ENCODE measurements at regions of chr4 and their contacts with region 1.

Region 1: GRCh38 chr4:102449751-102450352 is 51.3 kb upstream of the NFKB1 start:
- DNase-seq: peak; percentile 46
- H3K4me3 ChIP-seq: no peak overlapping the region
- H3K27ac ChIP-seq: no peak overlapping the region
- H3K4me1 ChIP-seq: peaks cover under 1 to 4% (median 3%) of the 10 kb centered on the region in 4 donors
- H3K27me3 ChIP-seq: no peaks in the 10 kb centered on the region
- CTCF ChIP-seq: peak; percentile 55 to 69 (median 63)
- EP300 ChIP-seq: no peak
- POLR2A ChIP-seq: no peak

Region 2: DNA sequence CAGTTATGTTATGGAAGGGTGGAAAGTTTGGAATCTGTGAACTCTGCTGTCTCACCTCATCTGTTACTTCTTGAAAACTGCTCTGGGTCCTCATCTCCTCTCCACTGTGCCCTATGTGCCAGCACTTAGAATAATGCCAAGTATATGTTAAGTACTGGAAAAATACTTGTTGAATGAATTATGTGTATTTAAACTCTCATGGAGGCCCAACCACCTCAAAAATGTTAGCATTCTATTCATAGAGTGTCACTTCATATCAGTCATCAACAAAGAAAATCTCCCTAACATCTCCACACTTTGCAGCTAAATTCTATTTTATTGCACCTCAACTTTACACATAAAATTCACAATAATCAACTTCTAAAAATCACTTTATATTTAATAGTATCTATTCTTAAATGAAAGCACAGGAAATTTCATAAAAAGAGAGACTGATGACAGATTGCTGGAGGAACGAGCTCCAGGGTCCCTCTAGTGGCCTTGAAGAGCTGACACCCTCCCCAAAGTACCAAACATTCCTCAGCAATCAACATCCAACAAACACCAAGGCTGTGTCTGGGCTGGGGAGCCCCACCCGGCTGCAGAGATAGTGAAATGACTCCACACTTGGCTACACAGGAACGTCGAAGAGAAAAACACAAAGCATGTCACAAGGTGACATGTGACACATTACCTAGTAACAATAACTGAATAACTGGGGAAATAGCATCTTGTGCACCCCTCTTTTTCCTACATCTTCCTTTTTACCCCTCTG is 150.3 kb before region 1 on chr4:
- in situ Hi-C with region 1: no loop called
- intact Hi-C with region 1: no loop called
- DNase-seq: no peak
- H3K4me3 ChIP-seq: no peak overlapping the region
- H3K27ac ChIP-seq: no peak overlapping the region
- H3K4me1 ChIP-seq: no peaks in the 10 kb centered on the region
- H3K27me3 ChIP-seq: no peaks in the 10 kb centered on the region
- CTCF ChIP-seq: peak in 4 of 5 experiments; percentile 25 to 43 (median 34)
- EP300 ChIP-seq: no peak
- POLR2A ChIP-seq: no peak

Region 3: DNA sequence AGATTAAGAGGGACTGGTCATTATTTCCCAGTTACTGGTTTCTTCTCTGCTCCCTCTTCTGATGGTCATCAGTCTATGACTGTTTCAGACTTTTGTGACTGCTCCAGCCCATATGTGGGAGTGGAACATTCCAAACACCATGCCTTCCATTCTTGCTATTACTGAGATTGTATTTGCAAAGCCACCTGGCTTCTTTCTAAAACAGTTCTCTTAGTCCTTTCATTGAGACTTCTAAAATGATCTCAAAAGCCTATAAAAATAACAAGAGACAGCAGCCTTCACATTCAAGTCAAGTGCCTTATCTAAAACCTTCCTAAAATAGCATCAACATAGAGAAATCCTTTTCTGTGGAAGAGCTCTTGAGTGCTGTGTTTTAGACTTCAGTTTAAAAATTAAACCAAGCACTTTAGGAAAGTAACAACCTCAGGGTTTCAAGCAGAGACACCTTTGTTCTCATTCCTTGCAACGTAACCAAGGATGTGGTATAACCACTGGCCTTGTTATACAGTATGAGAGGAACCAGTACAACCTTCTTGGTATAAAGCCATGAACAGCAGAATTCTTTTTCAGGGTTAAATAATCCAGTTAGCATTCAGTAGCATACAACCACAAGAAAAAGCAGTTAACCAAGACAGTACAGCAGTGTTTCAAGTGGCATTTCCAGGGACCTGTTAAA is 148.4 kb after region 1 on chr4:
- in situ Hi-C with region 1: loop called in 2 of 4 experiments (anchors 25 kb)
- intact Hi-C with region 1: no loop called
- DNase-seq: no peak
- H3K4me3 ChIP-seq: no peak overlapping the region
- H3K27ac ChIP-seq: no peak overlapping the region
- H3K4me1 ChIP-seq: peaks cover 0 to 5% (median 0%) of the 10 kb centered on the region in 4 donors
- H3K27me3 ChIP-seq: no peaks in the 10 kb centered on the region
- CTCF ChIP-seq: no peak
- EP300 ChIP-seq: no peak
- POLR2A ChIP-seq: no peak

Region 4: GRCh38 chr4:102620697-102621497 is 171.0 kb after region 1 on chr4:
- in situ Hi-C with region 1: loop called in 3 of 4 experiments (anchors 10 to 25 kb)
- intact Hi-C with region 1: loop called (anchors 10 kb)
- DNase-seq: peak; percentile 47
- H3K4me3 ChIP-seq: peak overlapping the region in 2 of 4 donors; percentile 13 to 32
- H3K27ac ChIP-seq: peak overlapping the region; percentile 53 to 75 (median 72)
- H3K4me1 ChIP-seq: peaks cover 0 to 17% (median 5%) of the 10 kb centered on the region in 4 donors
- H3K27me3 ChIP-seq: no peaks in the 10 kb centered on the region
- CTCF ChIP-seq: peak; percentile 36 to 84 (median 48)
- EP300 ChIP-seq: no peak
- POLR2A ChIP-seq: no peak

Region 5: DNA sequence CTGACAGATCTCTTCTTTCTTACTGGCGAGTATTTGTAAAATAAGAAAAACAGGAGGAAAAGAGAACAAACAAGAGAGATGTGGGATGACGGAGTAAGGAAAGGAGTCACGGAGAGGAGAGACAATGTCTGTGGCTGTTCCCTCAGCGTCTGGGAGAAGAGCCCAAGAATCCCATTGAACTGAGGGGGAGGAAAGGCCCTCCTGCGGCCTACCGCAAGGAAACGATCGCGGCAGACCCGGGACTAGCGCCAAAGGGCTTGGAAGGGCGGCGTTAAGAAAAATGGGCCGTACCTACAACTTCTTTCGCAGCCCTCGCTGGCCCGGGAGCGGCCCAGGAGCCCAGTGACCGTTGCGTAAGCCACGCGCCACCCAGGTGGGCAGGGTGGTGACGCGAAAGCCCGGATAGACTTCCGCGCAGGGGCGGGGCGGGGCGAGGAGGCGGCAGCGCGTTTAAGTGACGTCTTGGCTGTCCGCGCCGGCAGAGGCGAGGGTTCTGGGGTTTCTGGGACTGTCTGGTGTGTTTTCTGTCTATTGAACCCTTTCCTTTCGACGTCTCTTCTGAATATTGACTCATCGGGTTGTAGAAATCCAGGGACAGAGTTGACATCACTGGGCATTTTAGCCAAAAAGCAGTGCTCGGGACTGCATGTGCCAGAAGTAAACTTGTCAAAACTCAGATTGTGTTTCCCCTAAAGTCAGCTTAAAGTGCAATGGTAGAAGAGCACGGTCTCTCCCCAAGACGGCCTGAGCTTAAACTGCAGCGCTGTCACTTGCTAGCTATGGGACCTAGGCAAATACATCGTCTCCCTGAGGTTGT is 569.7 kb after region 1 on chr4 and contains the start of gene SLC9B1:
- in situ Hi-C with region 1: loop called in 1 of 4 experiments (anchors 10 kb)
- intact Hi-C with region 1: no loop called
- DNase-seq: peak; percentile 98
- H3K4me3 ChIP-seq: peak within 1 kb of the TSS; percentile 9 to 55 (median 32)
- H3K27ac ChIP-seq: peak within 1 kb of the TSS; percentile 89 to 93 (median 90)
- H3K4me1 ChIP-seq: peaks cover 3 to 13% (median 7%) of the 10 kb centered on the region in 4 donors
- H3K27me3 ChIP-seq: no peaks in the 10 kb centered on the region
- CTCF ChIP-seq: peak in 2 of 5 experiments; percentile 2 to 24
- EP300 ChIP-seq: peak; percentile 66
- POLR2A ChIP-seq: peak; percentile 88
- total RNA-seq, gene SLC9B1: 0.41 to 0.79 TPM in 2 of 4 donors, not detected in the others